ENCODE measurements at regions of chr5 and their contacts with region 1.

Region 1: DNA sequence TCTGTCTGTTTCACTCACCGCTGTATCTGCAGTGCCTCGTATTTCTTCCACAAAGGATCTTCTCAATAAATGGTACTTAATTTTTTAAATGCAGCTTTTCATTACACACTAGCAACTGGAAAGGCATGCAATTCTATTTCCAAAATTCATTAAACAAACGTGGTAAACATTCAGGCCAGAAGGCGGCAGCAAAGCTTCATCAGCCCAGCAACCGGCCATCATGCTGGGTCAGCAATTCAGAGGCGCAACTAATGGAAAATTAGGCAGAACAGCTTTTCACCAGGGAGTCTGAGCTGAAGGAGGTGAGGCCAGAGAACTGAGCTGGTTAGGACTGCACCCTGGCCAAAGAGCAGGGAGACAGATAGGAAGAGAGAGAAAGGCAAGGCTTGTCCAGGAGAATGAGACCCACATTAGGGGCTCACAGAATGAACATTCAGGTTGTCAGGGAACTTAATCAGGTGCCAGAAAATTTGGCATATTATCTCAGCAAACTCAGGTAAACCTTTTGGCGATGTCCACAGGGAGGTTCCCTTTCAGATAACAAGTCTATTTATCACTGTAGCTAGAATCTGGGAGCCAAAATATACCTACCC is 17.7 kb upstream of the RNF180 start:
- DNase-seq: peak; percentile 31 to 79 (median 66)
- ATAC-seq: peak; percentile 84
- H3K4me3 ChIP-seq: no peak overlapping the region
- H3K27ac ChIP-seq: no peak overlapping the region
- H3K4me1 ChIP-seq: no peaks in the 10 kb centered on the region
- H3K27me3 ChIP-seq: no peaks in the 10 kb centered on the region
- CTCF ChIP-seq: peak; percentile 23 to 59

Region 2: GRCh38 chr5:63981864-63982263 is 166.1 kb before region 1 on chr5:
- intact Hi-C with region 1: no loop called
- DNase-seq: no peak
- ATAC-seq: no peak
- H3K4me3 ChIP-seq: no peak overlapping the region
- H3K27ac ChIP-seq: no peak overlapping the region
- H3K4me1 ChIP-seq: no peaks in the 10 kb centered on the region
- H3K27me3 ChIP-seq: no peaks in the 10 kb centered on the region
- CTCF ChIP-seq: no peak

Region 3: GRCh38 chr5:64603676-64604075 is 455.7 kb after region 1 on chr5:
- intact Hi-C with region 1: loop called in 1 of 2 experiments (anchors 10 kb)
- DNase-seq: peak in 2 of 4 donors; percentile 16 to 19
- ATAC-seq: no peak
- H3K4me3 ChIP-seq: no peak overlapping the region
- H3K27ac ChIP-seq: no peak overlapping the region
- H3K4me1 ChIP-seq: no peaks in the 10 kb centered on the region
- H3K27me3 ChIP-seq: no peaks in the 10 kb centered on the region
- CTCF ChIP-seq: no peak